CD4-positive, alpha-beta memory T cell (primary cell): ENCODE measurements at regions of chr16 and their contacts with region 1.

Region 1: GRCh38 chr16:48852951-48853350 is 243.0 kb upstream of the N4BP1 start:
- DNase-seq: no peak
- H3K4me3 ChIP-seq: no peak overlapping the region
- H3K4me3 Mint-ChIP-seq: no peak overlapping the region
- H3K27ac ChIP-seq: no peak overlapping the region
- H3K27ac Mint-ChIP-seq: no peak overlapping the region
- H3K4me1 ChIP-seq: no peaks in the 10 kb centered on the region
- H3K4me1 Mint-ChIP-seq: no peaks in the 10 kb centered on the region
- H3K27me3 ChIP-seq: no peaks in the 10 kb centered on the region
- H3K27me3 Mint-ChIP-seq: no peaks in the 10 kb centered on the region

Region 2: DNA sequence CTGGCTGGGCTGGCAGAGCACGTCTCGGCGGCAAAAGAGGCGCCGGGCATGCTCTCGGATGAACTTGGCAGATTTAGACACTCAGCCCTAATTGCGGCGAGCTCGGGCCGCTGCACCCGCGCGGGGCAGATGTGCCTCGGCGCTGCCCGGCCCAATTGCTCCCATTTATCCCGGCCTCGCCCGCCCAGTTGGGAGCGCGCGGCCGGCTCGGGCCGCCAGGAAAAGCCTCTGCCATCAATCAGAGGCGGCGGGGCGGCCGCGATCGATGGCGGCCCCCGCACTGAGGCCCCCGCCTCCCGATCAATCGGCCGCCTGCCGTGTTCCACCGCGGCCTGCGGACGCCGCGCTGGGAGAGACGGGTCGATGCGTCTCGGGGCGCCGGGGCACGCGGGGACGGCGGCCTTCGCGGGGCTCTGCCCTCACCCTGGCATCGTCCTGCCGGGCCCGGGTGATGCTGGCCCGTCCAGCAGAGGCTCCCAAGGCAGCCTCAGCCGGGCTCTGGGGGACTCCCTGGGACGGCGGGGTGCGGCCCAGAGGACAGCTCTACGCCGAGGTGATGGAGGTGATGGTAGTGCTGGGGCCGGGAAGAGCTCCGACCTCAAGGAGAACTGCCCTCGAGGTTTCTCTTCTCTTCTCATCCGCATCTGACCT is 42.0 kb before region 1 on chr16:
- CTCF ChIA-PET with region 1: no interaction called
- POLR2A ChIA-PET with region 1: no interaction called
- intact Hi-C with region 1: loop called (anchors 1 kb)
- DNase-seq: no peak
- H3K4me3 ChIP-seq: no peak overlapping the region
- H3K4me3 Mint-ChIP-seq: no peak overlapping the region
- H3K27ac ChIP-seq: no peak overlapping the region
- H3K27ac Mint-ChIP-seq: no peak overlapping the region
- H3K4me1 ChIP-seq: no peaks in the 10 kb centered on the region
- H3K4me1 Mint-ChIP-seq: no peaks in the 10 kb centered on the region
- H3K27me3 ChIP-seq: no peaks in the 10 kb centered on the region
- H3K27me3 Mint-ChIP-seq: peaks cover 20 to 22% of the 10 kb centered on the region in 2 donors